ENCODE measurements at regions of chr12 and their contacts with region 1.

Region 1: DNA sequence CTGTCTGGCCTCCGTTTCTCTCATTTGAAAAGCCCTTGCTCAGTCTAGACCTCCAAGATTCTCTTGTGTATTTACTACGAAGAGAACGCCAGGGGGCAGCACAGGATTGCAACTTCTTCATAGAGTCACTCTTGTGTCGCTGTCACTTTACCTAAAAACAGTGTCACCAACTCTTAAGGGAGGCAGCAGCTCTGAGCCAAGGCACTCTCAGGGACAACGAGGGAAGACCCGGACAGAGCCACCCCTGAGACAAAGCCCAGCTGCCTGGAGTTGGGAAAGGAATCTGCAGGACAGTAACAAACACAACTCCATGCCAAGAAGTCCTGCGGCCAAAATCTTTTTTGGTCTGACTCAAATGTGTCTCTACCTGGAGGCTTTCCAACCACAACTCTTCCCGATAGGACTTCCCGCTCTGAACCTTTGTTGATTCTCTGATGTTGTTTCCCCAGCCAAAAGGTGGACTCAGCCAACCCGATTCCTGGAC is 9.6 kb upstream of the RPAP3 start:
- DNase-seq: peak; percentile 94
- H3K4me3 ChIP-seq: peak overlapping the region in 1 of 4 donors; percentile 13
- H3K27ac ChIP-seq: peak overlapping the region; percentile 79 to 88 (median 85)
- H3K4me1 ChIP-seq: peaks cover 0 to 46% (median 38%) of the 10 kb centered on the region in 4 donors
- H3K27me3 ChIP-seq: no peaks in the 10 kb centered on the region
- CTCF ChIP-seq: peak; percentile 63 to 85 (median 74)
- EP300 ChIP-seq: no peak
- POLR2A ChIP-seq: no peak

Region 2: GRCh38 chr12:47602325-47602724 is 113.1 kb before region 1 on chr12:
- intact Hi-C with region 1: no loop called
- DNase-seq: no peak
- H3K4me3 ChIP-seq: no peak overlapping the region
- H3K27ac ChIP-seq: peak overlapping the region in 3 of 4 donors; percentile 49 to 64 (median 53)
- H3K4me1 ChIP-seq: peaks cover 0 to 20% (median 10%) of the 10 kb centered on the region in 4 donors
- H3K27me3 ChIP-seq: no peaks in the 10 kb centered on the region
- CTCF ChIP-seq: no peak
- EP300 ChIP-seq: no peak
- POLR2A ChIP-seq: no peak

Region 3: DNA sequence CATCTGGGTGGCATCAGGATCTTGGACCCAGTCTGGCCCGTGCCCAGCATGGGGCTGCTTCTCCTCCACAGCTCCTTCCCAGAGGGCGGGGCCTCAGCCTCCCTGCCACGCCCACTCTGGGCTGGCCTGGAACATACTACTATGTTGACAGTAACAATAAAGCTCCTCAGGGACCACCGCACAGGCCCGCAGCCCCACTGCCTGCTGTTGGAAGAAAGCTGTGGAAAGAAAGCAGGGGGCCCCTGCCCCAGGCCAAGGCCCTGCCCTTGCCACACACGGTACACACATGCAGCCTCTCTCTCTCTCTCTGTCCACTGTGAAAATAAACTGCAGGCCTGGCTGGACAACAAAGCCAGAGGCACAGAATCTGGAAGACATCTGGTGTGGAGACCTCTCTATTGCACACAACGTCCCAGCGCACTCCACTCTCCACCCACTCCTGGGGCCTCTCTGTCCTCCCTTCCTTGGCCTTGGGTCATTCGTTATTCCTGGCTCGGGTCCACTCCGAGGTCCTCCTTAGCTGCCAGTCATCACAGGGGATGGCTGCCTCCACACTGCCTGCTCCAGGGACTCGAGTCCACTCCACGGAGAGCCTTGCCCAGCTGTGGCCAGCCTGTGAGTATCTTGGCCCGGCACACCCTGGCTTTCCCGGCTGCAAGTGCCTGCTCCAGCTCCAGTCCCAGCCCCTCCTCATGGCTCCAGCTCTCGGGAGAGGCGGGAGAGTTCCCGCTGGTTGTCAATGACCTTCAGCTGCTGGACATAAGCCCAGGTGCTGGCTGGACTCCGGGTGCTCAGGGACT is 21.6 kb after region 1 on chr12:
- intact Hi-C with region 1: loop called (anchors 2 kb)
- DNase-seq: peak; percentile 96
- H3K4me3 ChIP-seq: peak overlapping the region in 2 of 4 donors; percentile 2
- H3K27ac ChIP-seq: peak overlapping the region; percentile 78 to 83 (median 82)
- H3K4me1 ChIP-seq: peaks cover 0 to 53% (median 44%) of the 10 kb centered on the region in 4 donors
- H3K27me3 ChIP-seq: no peaks in the 10 kb centered on the region
- CTCF ChIP-seq: peak in 1 of 4 experiments; percentile 12
- EP300 ChIP-seq: peak in 1 of 4 donors; percentile 14
- POLR2A ChIP-seq: no peak

Region 4: DNA sequence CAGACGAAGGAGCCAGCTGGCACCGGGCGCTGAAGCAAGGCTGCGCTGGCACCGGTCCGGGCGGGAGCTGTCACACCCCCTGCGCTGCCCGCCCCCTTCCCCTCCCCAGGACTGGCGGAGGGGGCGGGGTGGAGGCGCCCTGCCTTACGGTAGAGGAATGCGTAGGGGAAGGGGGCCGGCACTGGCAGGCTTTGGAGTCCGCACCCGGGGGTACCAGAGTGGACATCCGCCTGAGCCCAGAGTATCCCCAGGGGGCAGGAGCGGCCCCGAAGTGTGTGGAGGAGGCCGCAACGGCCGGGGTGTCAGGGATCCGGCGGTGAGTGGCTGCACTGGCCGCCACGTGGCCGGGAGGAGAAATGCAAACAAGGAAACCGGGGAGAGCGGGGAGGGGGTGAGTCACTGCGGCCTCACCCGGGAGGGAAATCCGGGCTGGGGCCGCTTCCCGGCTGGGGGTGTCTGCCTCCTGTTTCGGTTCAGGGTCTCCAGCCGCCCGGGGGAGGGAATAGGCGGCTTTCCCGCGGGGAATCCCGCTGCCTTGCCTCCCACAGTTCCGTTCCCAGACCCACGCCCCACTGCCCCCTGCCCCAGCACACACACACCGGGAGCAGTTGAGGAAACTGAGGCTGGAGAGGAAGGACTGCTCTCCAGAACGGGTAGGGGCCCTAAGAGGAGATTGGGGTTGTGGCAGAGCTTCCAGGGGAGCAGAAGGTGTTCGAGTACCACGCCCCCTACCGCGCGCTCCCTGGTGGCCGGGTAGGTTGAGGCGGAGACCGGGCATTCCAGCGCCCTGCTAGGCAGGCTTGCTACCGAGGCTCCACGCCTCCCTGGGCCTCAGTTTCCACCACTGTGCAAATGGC is 43.6 kb after region 1 on chr12 and contains the start of gene RAPGEF3:
- intact Hi-C with region 1: loop called (anchors 2 kb)
- DNase-seq: peak; percentile 93
- H3K4me3 ChIP-seq: peak within 1 kb of the TSS; percentile 60 to 73 (median 64)
- H3K27ac ChIP-seq: peak within 1 kb of the TSS; percentile 75 to 80 (median 78)
- H3K4me1 ChIP-seq: peaks cover 0 to 24% (median 19%) of the 10 kb centered on the region in 4 donors
- H3K27me3 ChIP-seq: no peaks in the 10 kb centered on the region
- CTCF ChIP-seq: peak; percentile 36 to 56 (median 50)
- EP300 ChIP-seq: peak in 1 of 4 donors; percentile 9
- POLR2A ChIP-seq: no peak
- total RNA-seq, gene RAPGEF3: 13.8 to 36.8 (median 14.6) TPM

Region 5: DNA sequence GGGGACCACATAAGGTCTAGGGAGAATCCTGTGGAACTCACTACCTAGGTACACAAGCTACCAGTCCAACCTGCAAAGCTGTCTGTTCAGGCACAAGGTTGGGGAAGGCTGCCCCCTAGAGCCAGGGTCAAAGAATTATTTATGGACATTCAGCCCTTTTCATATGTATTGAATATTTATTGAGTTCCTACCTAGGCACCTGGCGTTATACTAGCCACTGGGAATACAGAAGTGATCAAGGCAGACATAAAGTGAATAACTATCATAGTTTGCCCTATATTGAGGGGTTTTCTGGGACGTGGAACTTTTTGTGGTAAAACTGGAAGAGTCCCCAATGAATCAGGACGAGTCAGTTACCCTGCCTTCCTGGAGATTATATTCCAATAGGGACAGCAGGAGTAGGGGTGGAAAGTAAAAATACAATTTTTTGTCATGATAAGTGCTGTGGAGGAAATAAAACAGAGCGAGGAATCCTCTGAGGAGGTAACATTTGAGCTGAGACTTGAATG is 51.8 kb after region 1 on chr12:
- intact Hi-C with region 1: loop called (anchors 2 kb)
- DNase-seq: no peak
- H3K4me3 ChIP-seq: no peak overlapping the region
- H3K27ac ChIP-seq: no peak overlapping the region
- H3K4me1 ChIP-seq: peaks cover 0 to 34% (median 15%) of the 10 kb centered on the region in 4 donors
- H3K27me3 ChIP-seq: no peaks in the 10 kb centered on the region
- CTCF ChIP-seq: peak; percentile 11 to 50 (median 40)
- EP300 ChIP-seq: no peak
- POLR2A ChIP-seq: no peak

Region 6: DNA sequence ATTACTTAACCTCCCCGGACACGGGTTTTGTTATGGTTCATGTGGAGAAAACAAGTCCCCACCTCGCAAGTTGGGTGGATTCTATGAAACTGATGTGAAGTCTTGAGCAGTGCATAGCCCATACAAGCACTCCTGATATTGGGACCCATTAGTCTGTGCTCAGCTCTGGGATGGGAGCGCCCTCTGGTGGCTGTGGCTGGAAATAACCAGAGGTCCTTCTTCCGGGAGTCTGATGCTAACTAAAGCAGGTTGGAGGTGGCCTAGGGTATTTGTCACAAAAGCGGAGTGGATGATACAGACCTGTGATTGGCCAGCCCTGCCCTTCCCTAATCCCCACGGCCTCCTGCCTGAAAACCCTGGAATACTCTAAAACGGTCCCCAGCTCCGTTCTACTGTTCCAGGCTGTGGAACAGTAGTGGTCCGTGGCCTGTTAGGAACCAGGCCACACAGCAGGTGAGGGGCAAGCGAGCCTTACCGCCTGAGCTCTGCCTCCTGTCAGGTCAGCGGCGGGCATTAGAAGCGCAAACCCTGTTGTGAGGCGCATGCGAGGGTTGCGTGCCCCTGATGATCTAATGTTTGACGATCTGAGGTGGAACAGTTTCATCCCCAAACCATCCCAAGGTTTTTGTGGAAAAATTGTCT is 64.0 kb after region 1 on chr12:
- intact Hi-C with region 1: loop called (anchors 2 kb)
- DNase-seq: peak; percentile 94
- H3K4me3 ChIP-seq: no peak overlapping the region
- H3K27ac ChIP-seq: peak overlapping the region in 3 of 4 donors; percentile 15 to 63 (median 57)
- H3K4me1 ChIP-seq: peaks cover 0 to 60% (median 48%) of the 10 kb centered on the region in 4 donors
- H3K27me3 ChIP-seq: no peaks in the 10 kb centered on the region
- CTCF ChIP-seq: peak; percentile 91 to 96 (median 93)
- EP300 ChIP-seq: no peak
- POLR2A ChIP-seq: no peak

Region 7: DNA sequence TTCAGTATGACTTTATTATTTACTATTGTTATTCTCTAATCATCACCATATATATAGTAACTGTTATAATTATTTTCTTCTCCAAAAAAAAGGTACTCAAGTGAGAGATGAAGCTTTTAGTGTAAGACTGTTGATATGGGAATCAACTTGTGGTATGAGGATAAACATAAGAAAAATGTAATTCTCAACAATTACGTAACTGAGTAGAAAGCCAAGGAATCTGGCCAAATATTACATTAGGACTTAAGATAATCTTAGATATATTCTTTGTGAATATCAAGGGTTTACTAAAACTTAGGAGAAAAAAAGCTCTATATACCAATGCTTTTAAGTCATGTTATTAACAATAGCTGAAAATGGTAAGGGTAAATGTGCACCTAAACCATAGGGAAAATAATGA is 377.2 kb after region 1 on chr12:
- intact Hi-C with region 1: no loop called
- DNase-seq: no peak
- H3K4me3 ChIP-seq: no peak overlapping the region
- H3K27ac ChIP-seq: no peak overlapping the region
- H3K4me1 ChIP-seq: no peaks in the 10 kb centered on the region
- H3K27me3 ChIP-seq: no peaks in the 10 kb centered on the region
- CTCF ChIP-seq: no peak
- EP300 ChIP-seq: no peak
- POLR2A ChIP-seq: no peak